ENCODE measurements at regions of chr3 and their contacts with region 1.

Region 1: DNA sequence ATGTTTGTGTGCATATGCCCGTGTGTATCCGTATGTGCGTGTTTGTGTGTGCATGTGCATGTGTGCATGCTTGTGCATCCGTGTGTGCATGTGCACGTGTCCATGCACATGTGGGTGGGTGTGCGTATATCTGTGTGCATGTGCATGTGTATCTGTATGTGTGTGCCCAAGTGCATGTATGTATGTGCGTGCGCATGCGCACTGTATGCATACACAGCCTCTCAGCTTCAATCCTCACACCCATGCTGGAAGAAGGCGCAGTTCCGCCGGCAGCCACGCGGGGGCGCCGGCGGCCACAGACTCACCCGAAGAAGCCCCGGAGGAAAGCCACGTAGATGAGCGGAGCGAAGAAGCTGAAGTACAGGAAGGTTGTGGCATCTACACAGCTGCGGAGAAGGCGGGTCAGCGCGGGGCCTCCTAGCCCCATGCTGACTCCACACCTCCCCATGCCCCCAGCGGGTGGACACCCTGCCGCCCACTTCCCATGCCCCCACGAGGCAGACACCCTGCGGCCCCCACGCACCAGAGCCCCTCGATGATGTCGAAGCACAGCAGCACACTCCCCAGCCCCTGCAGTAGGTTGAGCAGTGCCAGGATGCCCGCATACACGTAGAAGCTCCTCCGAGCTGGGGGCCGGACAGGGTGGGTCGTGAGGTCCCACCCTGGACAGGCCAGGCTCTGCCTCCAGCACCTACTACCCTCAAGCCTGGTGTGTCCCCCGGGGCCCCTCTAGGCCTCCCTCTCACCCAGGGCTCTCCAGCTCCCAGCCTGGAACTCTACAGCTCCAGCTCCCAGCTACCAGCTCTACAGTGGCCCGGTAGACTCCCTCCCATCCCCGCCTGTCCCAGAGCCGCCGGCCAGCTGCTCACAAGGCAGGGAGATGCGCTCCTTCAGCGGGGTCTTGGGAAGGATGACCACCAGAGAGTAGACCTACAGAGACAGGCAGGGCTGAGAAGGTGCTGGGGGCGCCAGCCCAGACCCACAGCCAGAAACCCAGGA is 15.4 kb downstream of the TPRA1 start:
- DNase-seq: peak; percentile 72 to 92 (median 87)
- ATAC-seq: peak; percentile 92 to 97 (median 96)
- H3K4me3 ChIP-seq: no peak overlapping the region
- H3K27ac ChIP-seq: no peak overlapping the region
- H3K4me1 ChIP-seq: no peaks in the 10 kb centered on the region
- H3K27me3 ChIP-seq: no peaks in the 10 kb centered on the region
- CTCF ChIP-seq: peak; percentile 93 to 98 (median 96)

Region 2: DNA sequence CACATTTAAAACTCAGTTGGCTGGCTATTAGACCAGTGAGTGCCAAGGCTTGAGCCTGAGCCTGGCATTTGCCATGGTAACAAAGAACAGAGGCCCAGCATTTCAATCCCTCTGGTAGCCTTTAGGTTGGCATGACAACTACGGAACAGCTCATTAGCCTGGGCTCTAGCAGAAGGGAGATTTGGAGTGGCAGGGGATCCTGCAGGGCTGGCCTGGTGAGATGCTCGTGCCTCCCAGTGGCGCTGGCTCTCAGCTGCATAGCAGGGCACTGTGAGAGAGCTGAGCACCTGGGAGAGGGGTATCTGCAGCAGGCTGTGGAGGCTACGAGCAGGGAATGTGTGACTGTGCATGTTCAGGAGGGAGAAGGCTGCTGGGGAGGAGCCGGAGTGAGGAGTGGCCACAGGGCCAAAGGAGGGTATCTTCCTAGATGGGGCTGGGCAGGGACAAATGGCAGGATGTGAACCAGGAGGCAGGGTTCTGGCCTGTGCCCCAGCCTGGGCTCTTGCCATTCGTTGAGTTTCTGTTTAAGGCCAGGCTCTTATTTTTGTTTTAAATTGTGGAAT is 92.0 kb after region 1 on chr3:
- intact Hi-C with region 1: no loop called
- DNase-seq: no peak
- ATAC-seq: no peak
- H3K4me3 ChIP-seq: no peak overlapping the region
- H3K27ac ChIP-seq: no peak overlapping the region
- H3K4me1 ChIP-seq: peaks cover 0 to 6% (median 4%) of the 10 kb centered on the region in 3 donors
- H3K27me3 ChIP-seq: no peaks in the 10 kb centered on the region
- CTCF ChIP-seq: no peak

Region 3: GRCh38 chr3:127697551-127698240 is 122.5 kb after region 1 on chr3:
- intact Hi-C with region 1: loop called in 1 of 3 experiments (anchors 10 kb)
- DNase-seq: peak; percentile 66 to 89 (median 81)
- ATAC-seq: peak; percentile 76 to 86 (median 82)
- H3K4me3 ChIP-seq: peak overlapping the region in 1 of 4 donors; percentile 8
- H3K27ac ChIP-seq: peak overlapping the region; percentile 52 to 81 (median 79)
- H3K4me1 ChIP-seq: peaks cover 14 to 26% (median 19%) of the 10 kb centered on the region in 3 donors
- H3K27me3 ChIP-seq: no peaks in the 10 kb centered on the region
- CTCF ChIP-seq: no peak

Region 4: GRCh38 chr3:128482666-128483656 is 907.8 kb after region 1 on chr3:
- intact Hi-C with region 1: no loop called
- DNase-seq: peak in 1 of 6 donors; percentile 24
- ATAC-seq: no peak
- H3K4me3 ChIP-seq: no peak overlapping the region
- H3K27ac ChIP-seq: no peak overlapping the region
- H3K4me1 ChIP-seq: peaks cover 0 to 3% (median 0%) of the 10 kb centered on the region in 3 donors
- H3K27me3 ChIP-seq: no peaks in the 10 kb centered on the region
- CTCF ChIP-seq: no peak

Measured in pancreas (tissue), 10 donors.